GM10248 (cell line): ENCODE measurements at regions of chr11 and their contacts with region 1.

Region 1: GRCh38 chr11:120511116-120511819 is at the start of gene GRIK4:
- DNase-seq: peak; percentile 93
- CTCF ChIP-seq: peak; percentile 97

Region 2: DNA sequence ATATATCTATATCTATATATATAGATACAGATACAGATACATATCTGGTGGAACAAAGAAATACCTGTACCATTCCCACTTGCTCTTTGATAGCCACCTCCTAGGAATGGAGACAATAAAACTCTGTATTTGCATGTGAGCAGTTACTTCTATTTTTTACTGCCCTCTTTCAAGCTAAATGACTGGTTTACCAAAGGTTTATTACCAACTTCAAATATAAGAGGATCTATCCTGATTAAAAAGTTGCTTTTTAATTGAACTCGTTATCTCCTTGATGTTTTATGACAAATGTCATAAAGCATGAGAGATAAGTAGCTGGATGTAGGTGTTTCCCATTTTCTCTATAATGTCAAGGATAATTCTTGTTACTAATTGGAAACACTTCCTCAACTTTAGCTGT is 21.5 kb before region 1 on chr11:
- CTCF ChIA-PET with region 1: interaction called, 10 read pairs
- POLR2A ChIA-PET with region 1: no interaction called
- DNase-seq: no peak
- CTCF ChIP-seq: no peak

Region 3: GRCh38 chr11:120500414-120501071 is 10.7 kb before region 1 on chr11:
- CTCF ChIA-PET with region 1: interaction called, 16 read pairs
- POLR2A ChIA-PET with region 1: no interaction called
- DNase-seq: no peak
- CTCF ChIP-seq: no peak

Region 4: DNA sequence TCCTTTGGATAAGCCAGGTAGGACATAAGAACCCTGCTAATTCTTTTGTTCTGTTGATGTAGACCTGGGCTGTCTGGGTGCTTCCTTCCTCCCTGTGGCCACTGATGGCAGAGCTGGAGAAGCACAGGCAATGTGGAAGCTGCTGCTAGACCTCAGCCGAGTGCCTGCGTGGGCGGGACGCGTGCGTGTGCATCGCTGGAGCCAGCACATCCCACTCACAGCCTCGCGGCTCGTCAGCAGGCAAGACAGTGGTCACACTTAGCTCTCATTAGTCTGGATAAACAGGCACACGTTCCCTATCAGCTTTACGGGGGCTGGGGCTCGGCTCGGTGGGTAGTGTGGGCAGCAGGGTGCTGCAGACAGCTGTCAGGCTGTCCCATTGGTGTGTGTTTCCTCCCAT is 156.0 kb after region 1 on chr11:
- CTCF ChIA-PET with region 1: interaction called, 11 read pairs
- POLR2A ChIA-PET with region 1: no interaction called
- DNase-seq: no peak
- CTCF ChIP-seq: no peak

Region 5: DNA sequence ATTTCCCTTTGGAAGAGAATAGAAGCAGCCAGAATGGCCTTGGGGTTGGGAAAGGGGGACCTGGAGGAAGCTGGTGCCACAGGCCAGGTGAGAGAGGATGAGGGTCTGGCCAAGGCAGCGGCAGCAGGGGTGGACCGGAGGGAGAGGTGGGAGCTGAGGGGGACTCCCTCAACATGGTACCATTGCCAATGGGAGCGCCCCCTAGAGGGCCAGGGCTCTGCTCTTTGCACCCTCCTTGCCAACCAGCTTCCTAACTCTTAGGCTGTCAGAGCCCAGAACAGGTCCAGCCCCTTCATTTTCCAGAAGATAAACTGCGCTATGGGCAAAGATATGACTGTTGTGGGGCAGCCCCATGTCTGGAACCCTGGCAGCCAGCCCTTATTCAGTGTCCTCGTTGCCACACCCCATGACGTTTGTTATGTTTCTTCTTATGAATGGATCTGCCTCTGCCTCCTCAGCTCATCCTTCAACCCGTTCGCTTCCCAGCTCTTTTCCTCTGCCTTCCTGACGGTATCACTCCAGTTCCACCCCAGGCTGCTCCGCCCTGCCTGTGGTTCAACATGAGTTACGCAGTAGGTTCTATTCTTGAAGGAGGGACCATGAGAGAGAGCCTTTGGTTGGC is 185.4 kb after region 1 on chr11:
- CTCF ChIA-PET with region 1: interaction called, 12 read pairs
- POLR2A ChIA-PET with region 1: no interaction called
- DNase-seq: no peak
- CTCF ChIP-seq: peak; percentile 21

Region 6: DNA sequence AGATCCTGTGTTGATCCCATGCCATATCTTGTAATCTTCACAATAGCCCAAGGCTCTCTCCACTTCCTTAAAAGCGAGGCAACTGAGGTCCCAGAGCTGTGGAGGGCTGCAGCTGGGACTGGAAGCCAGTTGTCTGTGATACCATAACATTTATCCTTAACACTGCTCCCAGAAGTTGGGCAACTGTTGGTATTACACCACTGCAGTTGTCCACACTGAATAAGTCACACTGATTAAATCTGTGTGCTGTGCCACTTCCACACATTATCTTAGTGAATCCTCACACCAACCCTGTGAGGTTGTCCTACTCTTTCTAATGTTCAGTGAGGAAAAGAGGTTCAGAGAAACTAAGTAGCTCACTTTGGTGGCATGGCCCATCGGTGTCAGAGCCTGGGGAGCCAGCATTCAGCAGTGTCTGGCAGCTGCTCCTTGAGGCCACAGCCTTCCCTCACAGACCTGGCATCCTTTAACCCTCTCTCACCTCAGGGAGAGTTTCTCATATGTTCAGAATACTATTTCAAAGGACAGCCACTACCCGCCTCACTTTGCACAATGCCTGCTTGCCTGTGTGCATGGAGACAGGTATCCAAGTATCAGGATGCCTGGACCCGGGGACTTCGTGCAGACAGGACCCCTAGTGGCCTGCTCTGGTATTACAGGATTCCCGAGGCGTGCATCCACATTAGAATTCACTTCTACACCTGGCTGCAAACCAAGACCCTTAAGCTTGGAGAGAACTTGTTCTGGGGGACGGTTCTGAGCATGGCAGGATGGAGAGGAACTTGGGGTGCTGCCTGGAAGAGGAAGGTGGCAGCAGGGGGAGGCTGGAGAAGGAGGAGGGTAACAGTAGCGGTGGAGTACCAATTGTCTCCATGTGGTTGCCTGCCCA is 290.8 kb after region 1 on chr11:
- CTCF ChIA-PET with region 1: interaction called, 23 read pairs
- POLR2A ChIA-PET with region 1: no interaction called
- DNase-seq: peak; percentile 76
- CTCF ChIP-seq: peak; percentile 74

Region 7: GRCh38 chr11:120952461-120953434 is 441.5 kb after region 1 on chr11:
- CTCF ChIA-PET with region 1: interaction called, 10 read pairs
- POLR2A ChIA-PET with region 1: no interaction called
- DNase-seq: peak; percentile 80
- CTCF ChIP-seq: peak; percentile 82